Breast epithelium (tissue), 4 donors: ENCODE measurements at regions of chr16 and their contacts with region 1.

Region 1: GRCh38 chr16:86621966-86622365 is 43.6 kb downstream of the FOXL1 start:
- DNase-seq: no peak
- H3K4me3 ChIP-seq: no peak overlapping the region
- H3K27ac ChIP-seq: no peak overlapping the region
- H3K4me1 ChIP-seq: no peaks in the 10 kb centered on the region
- H3K27me3 ChIP-seq: peaks cover 0 to 11% of the 10 kb centered on the region in 2 donors
- CTCF ChIP-seq: no peak
- POLR2A ChIP-seq: no peak

Region 2: GRCh38 chr16:85573696-85574641 is 1048.0 kb before region 1 on chr16:
- intact Hi-C with region 1: no loop called
- DNase-seq: peak in 1 of 2 donors; percentile 43
- H3K4me3 ChIP-seq: peak overlapping the region in 2 of 3 donors; percentile 22 to 53
- H3K27ac ChIP-seq: peak overlapping the region; percentile 86 to 93
- H3K4me1 ChIP-seq: peaks cover 16 to 31% of the 10 kb centered on the region in 2 donors
- H3K27me3 ChIP-seq: no peaks in the 10 kb centered on the region
- CTCF ChIP-seq: no peak
- POLR2A ChIP-seq: no peak

Region 3: GRCh38 chr16:86590501-86591144 is 31.3 kb before region 1 on chr16:
- intact Hi-C with region 1: no loop called
- DNase-seq: no peak
- H3K4me3 ChIP-seq: no peak overlapping the region
- H3K27ac ChIP-seq: no peak overlapping the region
- H3K4me1 ChIP-seq: no peaks in the 10 kb centered on the region
- H3K27me3 ChIP-seq: peaks cover 0 to 45% of the 10 kb centered on the region in 2 donors
- CTCF ChIP-seq: no peak
- POLR2A ChIP-seq: no peak

Region 4: DNA sequence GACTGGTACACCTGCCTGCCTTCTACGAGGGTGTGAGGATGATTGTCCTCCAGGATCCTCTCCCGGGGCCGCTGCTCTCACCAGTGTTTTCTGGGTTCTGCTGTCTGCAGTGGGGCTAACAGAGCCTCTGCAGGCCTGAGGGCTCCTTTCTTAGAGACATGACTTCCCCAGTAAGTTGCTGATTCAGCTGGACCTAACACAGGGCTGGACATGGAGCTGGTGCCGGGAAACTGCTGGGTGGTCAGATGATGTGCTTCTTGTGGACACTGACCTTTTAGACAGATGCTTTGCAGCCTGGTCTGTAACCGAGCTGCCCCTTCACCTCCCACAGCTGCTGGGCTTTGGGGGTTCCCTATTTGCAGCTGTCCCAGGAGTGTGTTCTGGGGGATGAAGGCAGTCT is 27.9 kb after region 1 on chr16:
- intact Hi-C with region 1: loop called (anchors 1 kb)
- DNase-seq: no peak
- H3K4me3 ChIP-seq: no peak overlapping the region
- H3K27ac ChIP-seq: no peak overlapping the region
- H3K4me1 ChIP-seq: no peaks in the 10 kb centered on the region
- H3K27me3 ChIP-seq: peaks cover 0 to 10% of the 10 kb centered on the region in 2 donors
- CTCF ChIP-seq: no peak
- POLR2A ChIP-seq: no peak

Region 5: DNA sequence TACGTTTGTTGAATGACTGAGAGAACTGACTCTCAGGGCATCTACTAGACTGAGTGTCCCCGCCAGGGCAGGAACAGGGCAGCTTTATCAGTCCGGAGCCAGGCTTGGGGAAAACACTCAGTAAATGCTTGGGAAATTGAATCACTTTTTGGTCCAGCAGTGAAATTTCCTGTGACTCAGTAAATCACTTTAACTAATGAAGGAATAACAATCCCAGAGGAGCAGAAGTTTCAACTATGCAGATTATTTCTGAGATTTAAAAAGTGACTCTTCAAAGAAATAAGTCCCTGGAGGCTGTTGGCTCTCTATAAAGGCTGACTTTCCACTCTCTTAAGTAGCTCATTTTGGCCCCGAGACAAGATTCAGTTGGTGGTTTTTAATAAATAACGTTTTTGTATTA is 58.2 kb after region 1 on chr16:
- intact Hi-C with region 1: no loop called
- DNase-seq: no peak
- H3K4me3 ChIP-seq: no peak overlapping the region
- H3K27ac ChIP-seq: peak overlapping the region; percentile 69 to 72
- H3K4me1 ChIP-seq: no peaks in the 10 kb centered on the region
- H3K27me3 ChIP-seq: peaks cover 0 to 8% of the 10 kb centered on the region in 2 donors
- CTCF ChIP-seq: no peak
- POLR2A ChIP-seq: no peak

Region 6: DNA sequence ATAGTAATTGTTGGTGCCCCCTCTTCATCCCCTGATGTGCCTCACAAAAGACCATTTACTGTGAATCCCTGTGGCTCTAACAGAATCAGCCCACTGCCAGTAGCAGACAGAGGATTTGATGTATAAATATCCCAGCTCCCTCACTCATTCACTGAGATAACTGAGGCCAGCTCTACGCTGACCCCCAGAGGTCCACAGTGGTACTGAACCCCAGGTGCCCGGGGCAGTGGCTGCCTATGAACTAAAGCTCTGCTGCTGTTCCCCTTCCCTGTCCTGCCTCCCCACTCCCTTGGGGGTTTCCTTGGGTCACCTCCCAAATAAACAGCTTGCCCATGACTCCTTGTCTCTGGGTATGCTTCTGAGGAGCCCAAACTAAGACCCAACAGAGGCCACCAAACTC is 252.2 kb after region 1 on chr16:
- intact Hi-C with region 1: no loop called
- DNase-seq: no peak
- H3K4me3 ChIP-seq: no peak overlapping the region
- H3K27ac ChIP-seq: no peak overlapping the region
- H3K4me1 ChIP-seq: no peaks in the 10 kb centered on the region
- H3K27me3 ChIP-seq: peaks cover 0 to 39% of the 10 kb centered on the region in 2 donors
- CTCF ChIP-seq: peak in 1 of 3 donors; percentile 13
- POLR2A ChIP-seq: no peak